Colonic mucosa (tissue), 4 donors: ENCODE measurements at regions of chr4 and their contacts with region 1.

Region 1: GRCh38 chr4:123102897-123103471 is 180.6 kb upstream of the NUDT6 start:
- DNase-seq: no peak
- H3K4me3 ChIP-seq: no peak overlapping the region
- H3K27ac ChIP-seq: no peak overlapping the region
- H3K4me1 ChIP-seq: no peaks in the 10 kb centered on the region
- H3K27me3 ChIP-seq: no peaks in the 10 kb centered on the region
- CTCF ChIP-seq: peak; percentile 65

Region 2: GRCh38 chr4:123017636-123018395 is 85.2 kb before region 1 on chr4:
- intact Hi-C with region 1: no loop called
- DNase-seq: no peak
- H3K4me3 ChIP-seq: no peak overlapping the region
- H3K27ac ChIP-seq: no peak overlapping the region
- H3K4me1 ChIP-seq: no peaks in the 10 kb centered on the region
- H3K27me3 ChIP-seq: no peaks in the 10 kb centered on the region
- CTCF ChIP-seq: no peak

Region 3: GRCh38 chr4:123380728-123381716 is 278.0 kb after region 1 on chr4:
- intact Hi-C with region 1: loop called (anchors 10 kb)
- DNase-seq: no peak
- H3K4me3 ChIP-seq: no peak overlapping the region
- H3K27ac ChIP-seq: no peak overlapping the region
- H3K4me1 ChIP-seq: no peaks in the 10 kb centered on the region
- H3K27me3 ChIP-seq: no peaks in the 10 kb centered on the region
- CTCF ChIP-seq: no peak

Region 4: DNA sequence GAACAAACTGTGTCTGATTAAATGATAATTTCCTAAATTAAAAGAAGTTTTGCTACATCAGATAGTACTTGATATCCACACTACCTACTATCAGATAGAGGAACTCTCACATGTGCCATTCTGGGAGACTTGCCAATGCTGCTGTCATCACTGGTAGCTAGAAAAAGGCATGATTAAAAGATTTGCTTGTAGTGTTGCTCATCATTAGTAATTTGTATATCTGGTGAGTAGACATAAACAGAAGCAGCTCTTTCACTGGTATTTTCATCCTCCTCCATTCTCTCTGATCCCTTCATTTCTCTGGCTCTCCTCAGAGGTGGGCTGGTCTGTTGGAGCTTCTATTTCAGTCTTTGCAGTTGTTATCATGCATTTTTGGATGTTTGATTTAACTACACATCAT is 349.6 kb after region 1 on chr4:
- intact Hi-C with region 1: no loop called
- DNase-seq: peak; percentile 59
- H3K4me3 ChIP-seq: no peak overlapping the region
- H3K27ac ChIP-seq: no peak overlapping the region
- H3K4me1 ChIP-seq: no peaks in the 10 kb centered on the region
- H3K27me3 ChIP-seq: no peaks in the 10 kb centered on the region
- CTCF ChIP-seq: no peak

Region 5: GRCh38 chr4:123649645-123650391 is 546.8 kb after region 1 on chr4:
- intact Hi-C with region 1: loop called (anchors 10 kb)
- DNase-seq: peak; percentile 62
- H3K4me3 ChIP-seq: no peak overlapping the region
- H3K27ac ChIP-seq: peak overlapping the region; percentile 73
- H3K4me1 ChIP-seq: no peaks in the 10 kb centered on the region
- H3K27me3 ChIP-seq: no peaks in the 10 kb centered on the region
- CTCF ChIP-seq: no peak

Region 6: DNA sequence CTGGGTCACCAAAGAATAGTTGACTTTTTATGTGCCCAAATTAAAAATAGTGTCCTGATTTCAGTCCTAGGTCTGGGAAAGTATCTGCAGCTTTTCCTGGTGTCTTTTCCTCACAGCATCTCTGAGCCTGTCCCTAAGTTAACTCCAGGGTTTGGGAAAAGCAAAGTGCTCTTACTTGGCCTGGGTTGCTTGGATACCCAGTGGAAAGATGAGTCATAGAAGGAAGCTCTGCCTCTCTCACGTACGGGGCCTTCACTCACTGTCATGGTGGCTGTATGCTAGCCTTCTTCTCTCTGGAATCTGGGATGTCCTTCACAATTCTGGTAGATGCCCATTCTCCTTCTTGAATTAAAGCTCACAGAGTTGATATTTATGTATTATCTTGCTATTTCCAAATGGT is 1002.2 kb after region 1 on chr4:
- intact Hi-C with region 1: loop called (anchors 10 kb)
- DNase-seq: no peak
- H3K4me3 ChIP-seq: no peak overlapping the region
- H3K27ac ChIP-seq: no peak overlapping the region
- H3K4me1 ChIP-seq: no peaks in the 10 kb centered on the region
- H3K27me3 ChIP-seq: no peaks in the 10 kb centered on the region
- CTCF ChIP-seq: no peak

Region 7: GRCh38 chr4:124262211-124263179 is 1159.5 kb after region 1 on chr4:
- intact Hi-C with region 1: loop called (anchors 5 kb)
- DNase-seq: peak; percentile 63
- H3K4me3 ChIP-seq: no peak overlapping the region
- H3K27ac ChIP-seq: no peak overlapping the region
- H3K4me1 ChIP-seq: no peaks in the 10 kb centered on the region
- H3K27me3 ChIP-seq: no peaks in the 10 kb centered on the region
- CTCF ChIP-seq: peak; percentile 68

Region 8: GRCh38 chr4:124322234-124323065 is 1219.5 kb after region 1 on chr4:
- intact Hi-C with region 1: loop called (anchors 10 kb)
- DNase-seq: no peak
- H3K4me3 ChIP-seq: no peak overlapping the region
- H3K27ac ChIP-seq: no peak overlapping the region
- H3K4me1 ChIP-seq: no peaks in the 10 kb centered on the region
- H3K27me3 ChIP-seq: no peaks in the 10 kb centered on the region
- CTCF ChIP-seq: peak; percentile 53